BJ (cell line): ENCODE measurements at regions of chr13 and their contacts with region 1.

Region 1: GRCh38 chr13:51785712-51786424 is 18.1 kb downstream of the DHRS12 start:
- DNase-seq: peak; percentile 38
- H3K4me3 ChIP-seq: no peak overlapping the region
- H3K27me3 ChIP-seq: no peaks in the 10 kb centered on the region
- CTCF ChIP-seq: no peak

Region 2: DNA sequence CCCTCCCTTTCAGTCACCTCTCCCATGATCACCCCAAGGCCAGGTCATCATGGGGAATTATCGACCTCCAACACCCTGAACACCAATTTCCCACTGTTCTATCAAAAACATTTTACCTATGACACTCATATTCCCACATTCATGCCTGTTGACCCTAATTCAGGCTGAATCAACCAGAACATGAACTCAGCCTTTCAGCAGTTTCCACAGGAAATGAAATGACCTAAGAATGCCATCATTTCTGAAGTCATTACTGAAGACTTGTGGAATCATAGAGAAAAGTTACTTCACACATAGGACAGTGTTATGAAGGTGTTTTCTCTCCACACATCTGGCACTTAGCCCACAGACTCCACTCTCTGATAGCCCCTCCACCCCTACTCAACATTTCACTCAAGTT is 593.5 kb before region 1 on chr13:
- CTCF ChIA-PET with region 1: no interaction called
- POLR2A ChIA-PET with region 1: no interaction called
- DNase-seq: no peak
- H3K4me3 ChIP-seq: no peak overlapping the region
- H3K27me3 ChIP-seq: 0 out of 2 replicates have a peak, but pooled peaks cover 2% of the 10 kb centered on the region
- CTCF ChIP-seq: no peak

Region 3: DNA sequence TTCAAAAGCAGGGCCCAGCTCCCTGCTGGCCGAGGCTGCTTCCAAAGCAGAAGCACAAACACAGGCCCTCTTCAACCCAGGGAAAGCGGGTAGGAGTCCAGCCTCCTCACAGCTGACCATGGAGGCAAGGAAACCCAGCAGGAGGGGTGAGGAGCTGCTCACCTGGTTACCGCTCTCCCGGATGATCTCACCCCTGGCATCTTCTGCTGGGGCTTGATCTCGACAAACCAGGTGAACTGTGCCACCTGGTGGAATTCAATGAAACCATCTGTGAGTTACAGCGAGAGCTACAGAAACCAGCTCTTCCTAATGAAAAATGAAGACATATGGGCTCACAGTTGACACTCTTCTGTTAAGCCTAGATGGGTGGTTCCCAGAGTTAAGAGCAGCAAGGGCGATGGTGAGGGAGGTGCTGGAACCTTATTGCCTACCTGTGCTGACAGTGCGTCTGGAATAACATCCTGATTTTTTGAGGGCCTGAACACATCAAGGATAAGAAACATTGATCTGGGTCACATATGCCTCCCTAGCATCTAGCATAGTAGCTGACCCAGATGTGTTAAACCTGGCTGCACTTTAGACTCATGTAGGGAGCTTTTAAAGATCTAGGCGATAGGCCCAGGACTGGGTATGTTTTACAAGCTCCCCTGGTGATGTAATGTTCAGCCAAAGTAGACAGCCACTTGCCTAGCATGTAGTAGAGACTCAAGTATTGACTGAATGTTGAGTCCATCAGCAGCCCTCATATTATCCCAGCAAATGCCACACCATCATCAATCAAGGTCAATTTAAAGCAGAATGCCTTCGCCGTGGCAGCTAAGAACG is 12.0 kb after region 1 on chr13:
- CTCF ChIA-PET with region 1: interaction called, 10 read pairs
- POLR2A ChIA-PET with region 1: interaction called, 3 read pairs
- DNase-seq: no peak
- H3K4me3 ChIP-seq: no peak overlapping the region
- H3K27me3 ChIP-seq: peaks cover 2% of the 10 kb centered on the region
- CTCF ChIP-seq: peak; percentile 39; the same call in 1 of the 2 replicates